Caco-2 (cell line): ENCODE measurements at regions of chr3 and their contacts with region 1.

Region 1: GRCh38 chr3:71317749-71318457 is 265.6 kb downstream of the FOXP1 start:
- DNase-seq: no peak
- H3K4me3 ChIP-seq: no peak overlapping the region
- H3K4me3 Mint-ChIP-seq: peak overlapping the region; percentile 46
- H3K27ac Mint-ChIP-seq: no peak overlapping the region
- H3K4me1 ChIP-seq: peaks cover 23% of the 10 kb centered on the region; the same call in 1 of the 2 replicates
- H3K4me1 Mint-ChIP-seq: peaks cover 18% of the 10 kb centered on the region
- H3K27me3 ChIP-seq: no peaks in the 10 kb centered on the region
- H3K27me3 Mint-ChIP-seq: no peaks in the 10 kb centered on the region
- CTCF ChIP-seq: no peak

Region 2: DNA sequence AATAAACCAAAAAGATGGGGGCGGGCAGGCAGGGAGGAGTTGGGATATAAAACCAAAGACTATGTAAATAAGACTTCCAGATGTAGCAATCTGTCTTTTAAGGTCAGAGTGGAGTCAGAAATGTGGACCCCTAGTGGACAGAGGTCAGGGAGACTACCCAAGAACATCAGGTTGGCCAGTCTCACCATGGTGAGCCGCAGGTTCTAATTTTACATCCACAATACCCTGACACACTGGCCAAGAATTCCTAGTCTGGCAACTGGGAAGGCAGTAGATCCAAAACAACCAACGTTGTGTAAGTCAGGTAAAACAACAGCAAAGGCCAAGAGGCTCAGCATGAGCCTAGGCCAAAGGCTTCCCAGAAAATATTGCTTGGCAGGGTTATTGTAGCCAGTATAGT is 62.2 kb after region 1 on chr3:
- CTCF ChIA-PET with region 1: no interaction called
- POLR2A ChIA-PET with region 1: no interaction called
- intact Hi-C with region 1: loop called (anchors 5 kb)
- DNase-seq: peak in 1 of 2 experiments; percentile 38
- H3K4me3 ChIP-seq: no peak overlapping the region
- H3K4me3 Mint-ChIP-seq: no peak overlapping the region
- H3K27ac Mint-ChIP-seq: no peak overlapping the region
- H3K4me1 ChIP-seq: peaks cover 24% of the 10 kb centered on the region
- H3K4me1 Mint-ChIP-seq: peaks cover 20% of the 10 kb centered on the region
- H3K27me3 ChIP-seq: no peaks in the 10 kb centered on the region
- H3K27me3 Mint-ChIP-seq: no peaks in the 10 kb centered on the region
- CTCF ChIP-seq: peak in 1 of 2 experiments; percentile 39